ENCODE measurements at regions of chr5 and their contacts with region 1.

Region 1: DNA sequence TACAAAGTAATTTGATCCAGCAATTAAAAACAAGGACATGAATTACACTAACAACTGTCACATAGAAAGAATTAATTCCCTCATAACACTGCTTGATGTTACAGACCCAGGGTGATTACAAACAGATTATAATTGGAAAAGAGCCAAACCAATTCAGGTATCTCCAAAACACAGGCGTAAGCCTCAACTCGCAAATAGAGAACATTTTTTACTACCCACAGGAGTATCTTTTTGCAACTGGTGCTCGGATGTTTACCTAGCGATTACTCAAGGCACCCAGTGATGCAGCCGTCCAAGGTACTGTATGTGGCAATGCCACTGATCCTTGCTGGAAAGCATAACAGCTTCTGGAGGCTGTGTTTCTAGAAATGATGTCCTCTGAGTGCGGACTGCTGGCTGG is 386.1 kb upstream of the KIF2A start:
- DNase-seq: peak; percentile 94
- H3K4me3 ChIP-seq: no peak overlapping the region
- H3K27ac ChIP-seq: peak overlapping the region; percentile 100
- H3K4me1 ChIP-seq: peaks cover 61% of the 10 kb centered on the region
- H3K27me3 ChIP-seq: no peaks in the 10 kb centered on the region
- CTCF ChIP-seq: no peak

Region 2: DNA sequence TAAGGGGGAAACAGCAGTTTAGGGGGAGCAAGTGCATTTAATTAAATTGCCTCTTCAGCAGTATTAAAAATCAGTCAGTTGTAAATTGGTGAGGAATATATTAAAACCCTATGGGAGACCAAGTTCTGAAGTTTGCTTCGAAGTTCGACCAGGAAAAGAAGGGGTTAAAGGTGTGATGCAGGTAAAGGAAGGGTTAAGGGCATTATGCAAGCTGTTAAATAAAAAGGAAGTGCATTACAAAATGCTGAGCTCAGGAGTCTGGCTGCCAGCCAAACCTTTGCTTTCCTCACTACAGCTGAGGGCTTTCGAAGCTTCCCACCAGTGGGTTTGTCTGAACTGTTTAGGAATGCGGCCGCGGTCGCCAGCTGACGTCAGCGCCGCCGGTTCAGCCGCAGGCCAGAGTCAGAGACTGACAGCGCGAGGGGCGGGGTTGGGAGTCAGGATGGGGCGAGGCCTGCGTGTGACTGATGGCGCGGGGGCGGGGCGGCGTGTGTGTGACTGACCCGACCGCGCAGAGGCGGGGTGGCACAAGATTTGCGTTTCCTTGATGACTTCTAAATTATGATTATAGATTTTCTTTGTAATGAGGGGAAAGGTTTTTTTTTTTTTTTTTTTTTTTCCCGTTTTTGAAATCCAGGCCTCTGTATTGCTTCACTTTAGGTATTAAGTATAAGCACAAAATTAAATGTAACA is 511.3 kb before region 1 on chr5:
- CTCF ChIA-PET with region 1: no interaction called
- dilution Hi-C with region 1: no loop called
- in situ Hi-C with region 1: no loop called
- intact Hi-C with region 1: loop called (anchors 2 kb)
- DNase-seq: peak; percentile 100
- H3K4me3 ChIP-seq: peak overlapping the region; percentile 2 to 54 (median 35)
- H3K27ac ChIP-seq: peak overlapping the region; percentile 100
- H3K4me1 ChIP-seq: peaks cover 21% of the 10 kb centered on the region
- H3K27me3 ChIP-seq: no peaks in the 10 kb centered on the region
- CTCF ChIP-seq: no peak

Region 3: GRCh38 chr5:61586096-61587084 is 333.5 kb before region 1 on chr5:
- CTCF ChIA-PET with region 1: no interaction called
- dilution Hi-C with region 1: no loop called
- in situ Hi-C with region 1: no loop called
- intact Hi-C with region 1: no loop called
- DNase-seq: no peak
- H3K4me3 ChIP-seq: no peak overlapping the region
- H3K27ac ChIP-seq: no peak overlapping the region
- H3K4me1 ChIP-seq: no peaks in the 10 kb centered on the region
- H3K27me3 ChIP-seq: no peaks in the 10 kb centered on the region
- CTCF ChIP-seq: no peak

Region 4: GRCh38 chr5:61805101-61805500 is 114.8 kb before region 1 on chr5:
- CTCF ChIA-PET with region 1: no interaction called
- dilution Hi-C with region 1: no loop called
- in situ Hi-C with region 1: no loop called
- intact Hi-C with region 1: loop called (anchors 5 kb)
- DNase-seq: peak; percentile 86
- H3K4me3 ChIP-seq: no peak overlapping the region
- H3K27ac ChIP-seq: peak overlapping the region; percentile 58
- H3K4me1 ChIP-seq: peaks cover 36% of the 10 kb centered on the region
- H3K27me3 ChIP-seq: no peaks in the 10 kb centered on the region
- CTCF ChIP-seq: no peak

Region 5: GRCh38 chr5:61866930-61867329 is 53.0 kb before region 1 on chr5:
- CTCF ChIA-PET with region 1: no interaction called
- dilution Hi-C with region 1: no loop called
- in situ Hi-C with region 1: no loop called
- intact Hi-C with region 1: loop called (anchors 2 kb)
- DNase-seq: peak; percentile 95
- H3K4me3 ChIP-seq: no peak overlapping the region
- H3K27ac ChIP-seq: peak overlapping the region; percentile 62
- H3K4me1 ChIP-seq: peaks cover 17% of the 10 kb centered on the region
- H3K27me3 ChIP-seq: no peaks in the 10 kb centered on the region
- CTCF ChIP-seq: no peak